ENCODE measurements at regions of chr20 and their contacts with region 1.

Region 1: GRCh38 chr20:63864847-63865640 is at the start of gene TPD52L2:
- DNase-seq: peak; percentile 93
- ATAC-seq: peak; percentile 82
- H3K4me3 Mint-ChIP-seq: peak within 1 kb of the TSS; percentile 99
- H3K27ac Mint-ChIP-seq: peak within 1 kb of the TSS; percentile 99
- H3K4me1 Mint-ChIP-seq: peaks cover 33% of the 10 kb centered on the region
- H3K27me3 Mint-ChIP-seq: no peaks in the 10 kb centered on the region
- CTCF ChIP-seq: no peak
- total RNA-seq, gene TPD52L2: 36.7 and 38.8 TPM in 2 replicates

Region 2: DNA sequence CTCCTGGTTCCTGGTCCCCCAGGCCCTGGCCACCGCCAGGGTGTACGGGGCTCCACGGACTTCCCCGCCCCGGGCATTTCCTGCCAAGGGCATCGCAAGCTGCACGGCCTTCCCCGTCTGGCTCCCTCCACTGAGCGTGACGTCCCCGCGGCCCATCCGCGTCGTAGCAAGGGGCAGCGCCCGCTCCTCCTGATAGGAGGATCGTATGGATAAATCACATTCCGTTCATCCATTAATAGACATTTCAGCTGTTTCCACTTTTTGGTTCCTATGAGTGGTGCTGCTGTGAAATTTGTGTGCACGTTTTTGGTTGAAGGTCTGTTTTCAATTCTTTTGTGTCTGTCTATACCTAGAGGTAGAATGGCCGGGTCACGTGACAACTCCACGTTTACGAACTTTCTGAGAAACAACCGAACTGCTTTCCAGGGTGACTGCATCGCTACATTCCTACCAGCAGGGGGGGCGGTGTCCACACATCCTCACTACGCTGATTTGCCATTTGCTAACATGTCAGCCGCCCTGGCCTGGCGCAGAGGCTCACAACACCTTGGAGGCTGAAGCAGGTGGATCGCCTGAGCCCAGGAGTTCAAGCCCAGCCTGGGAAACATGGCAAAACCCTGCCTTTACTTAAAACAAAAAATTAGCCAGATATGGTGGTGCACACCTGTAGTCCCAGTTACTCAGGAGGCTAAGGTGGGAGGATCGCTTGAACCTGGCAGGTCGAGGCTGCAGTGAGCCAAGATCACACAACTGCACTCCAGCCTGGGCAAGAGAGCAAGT is 430.3 kb before region 1 on chr20:
- CTCF ChIA-PET with region 1: no interaction called
- POLR2A ChIA-PET with region 1: no interaction called
- intact Hi-C with region 1: loop called (anchors 2 kb)
- DNase-seq: peak; percentile 43
- ATAC-seq: peak; percentile 73
- H3K4me3 Mint-ChIP-seq: peak overlapping the region; percentile 37
- H3K27ac Mint-ChIP-seq: peak overlapping the region; percentile 32
- H3K4me1 Mint-ChIP-seq: peaks cover 12% of the 10 kb centered on the region
- H3K27me3 Mint-ChIP-seq: peaks cover 14% of the 10 kb centered on the region
- CTCF ChIP-seq: peak; percentile 32

Region 3: DNA sequence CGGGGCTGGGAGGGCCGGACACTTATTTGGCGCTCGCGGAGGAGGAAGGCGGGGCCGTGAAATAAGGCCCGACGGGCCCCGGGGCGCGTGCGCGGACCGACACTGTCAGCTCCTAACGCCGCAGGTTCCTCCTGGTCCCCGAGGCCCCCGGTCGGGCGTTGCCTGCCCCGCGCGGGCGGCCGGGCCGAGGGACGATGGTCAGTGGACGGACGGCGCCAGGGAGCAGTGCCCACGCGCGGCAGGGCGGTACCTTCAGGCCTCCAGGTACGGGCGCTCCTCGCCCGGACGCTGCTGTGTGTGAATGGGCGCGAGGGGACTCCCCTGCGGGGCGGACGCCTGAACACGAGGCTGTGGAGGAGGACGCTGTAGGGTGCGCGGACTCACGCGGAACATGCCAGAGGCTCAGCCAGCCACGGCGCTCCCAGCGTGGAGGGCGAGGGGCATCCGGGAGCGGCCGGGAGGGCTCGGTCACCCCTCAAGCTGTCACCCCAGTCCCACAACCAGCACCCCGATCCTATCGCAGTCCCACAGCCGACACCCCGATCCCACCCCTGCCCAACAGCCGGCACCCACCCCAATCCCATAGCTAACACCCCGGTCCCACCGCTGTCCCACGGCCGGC is 237.8 kb before region 1 on chr20:
- CTCF ChIA-PET with region 1: no interaction called
- POLR2A ChIA-PET with region 1: interaction called, 3 read pairs
- intact Hi-C with region 1: loop called (anchors 5 kb)
- DNase-seq: peak; percentile 97
- ATAC-seq: peak; percentile 77
- H3K4me3 Mint-ChIP-seq: peak overlapping the region; percentile 91
- H3K27ac Mint-ChIP-seq: peak overlapping the region; percentile 93
- H3K4me1 Mint-ChIP-seq: peaks cover 45% of the 10 kb centered on the region
- H3K27me3 Mint-ChIP-seq: no peaks in the 10 kb centered on the region
- CTCF ChIP-seq: no peak

Region 4: GRCh38 chr20:63707549-63708300 is 157.3 kb before region 1 on chr20 and contains the starts of genes ARFRP1 and ZGPAT:
- CTCF ChIA-PET with region 1: interaction called, 10 read pairs
- POLR2A ChIA-PET with region 1: interaction called, 18 read pairs
- intact Hi-C with region 1: loop called (anchors 1 kb)
- DNase-seq: peak; percentile 91
- ATAC-seq: peak; percentile 94
- H3K4me3 Mint-ChIP-seq: peak within 1 kb of the TSS; percentile 87
- H3K27ac Mint-ChIP-seq: peak within 1 kb of the TSS; percentile 72
- H3K4me1 Mint-ChIP-seq: peaks cover 42% of the 10 kb centered on the region
- H3K27me3 Mint-ChIP-seq: no peaks in the 10 kb centered on the region
- CTCF ChIP-seq: no peak
- total RNA-seq, gene ARFRP1: 63.5 and 66.0 TPM in 2 replicates
- total RNA-seq, gene ZGPAT: 40.7 and 44.0 TPM in 2 replicates

Region 5: DNA sequence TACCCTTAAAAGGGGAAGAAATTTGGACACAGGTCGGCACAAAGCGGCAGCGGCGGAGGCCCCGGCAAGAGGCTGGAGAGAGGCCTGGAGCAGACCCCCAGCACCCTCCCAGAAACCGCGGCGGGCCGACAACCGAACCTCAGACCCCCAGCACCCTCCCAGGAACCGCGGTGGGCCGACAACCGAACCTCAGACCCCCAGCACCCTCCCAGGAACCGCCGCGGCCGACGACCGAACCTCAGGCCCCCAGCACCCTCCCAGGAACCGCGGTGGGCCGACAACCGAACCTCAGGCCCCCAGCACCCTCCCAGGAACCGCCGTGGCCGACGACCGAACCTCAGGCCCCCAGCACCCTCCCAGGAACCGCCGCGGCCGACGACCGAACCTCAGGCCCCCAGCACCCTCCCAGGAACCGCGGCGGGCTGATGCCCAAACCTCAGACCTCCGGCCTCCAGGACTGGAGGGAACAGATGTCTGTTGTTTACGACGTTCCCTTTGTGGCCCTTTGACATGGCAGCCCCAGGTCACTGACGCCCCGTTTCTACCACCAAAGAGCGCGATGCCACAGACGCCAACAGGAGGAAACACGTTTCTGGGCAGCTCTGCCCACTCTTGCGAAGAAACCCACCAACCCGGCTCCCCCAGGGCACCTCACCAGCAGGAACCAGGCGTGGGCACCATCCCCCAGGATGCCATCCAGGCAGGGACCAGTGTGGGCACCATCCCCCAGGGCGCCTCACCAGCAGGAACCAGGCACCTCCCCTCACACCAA is 62.4 kb before region 1 on chr20:
- CTCF ChIA-PET with region 1: no interaction called
- POLR2A ChIA-PET with region 1: no interaction called
- intact Hi-C with region 1: loop called (anchors 1 kb)
- DNase-seq: no peak
- ATAC-seq: no peak
- H3K4me3 Mint-ChIP-seq: no peak overlapping the region
- H3K27ac Mint-ChIP-seq: no peak overlapping the region
- H3K4me1 Mint-ChIP-seq: peaks cover 14% of the 10 kb centered on the region
- H3K27me3 Mint-ChIP-seq: no peaks in the 10 kb centered on the region
- CTCF ChIP-seq: no peak

Region 6: DNA sequence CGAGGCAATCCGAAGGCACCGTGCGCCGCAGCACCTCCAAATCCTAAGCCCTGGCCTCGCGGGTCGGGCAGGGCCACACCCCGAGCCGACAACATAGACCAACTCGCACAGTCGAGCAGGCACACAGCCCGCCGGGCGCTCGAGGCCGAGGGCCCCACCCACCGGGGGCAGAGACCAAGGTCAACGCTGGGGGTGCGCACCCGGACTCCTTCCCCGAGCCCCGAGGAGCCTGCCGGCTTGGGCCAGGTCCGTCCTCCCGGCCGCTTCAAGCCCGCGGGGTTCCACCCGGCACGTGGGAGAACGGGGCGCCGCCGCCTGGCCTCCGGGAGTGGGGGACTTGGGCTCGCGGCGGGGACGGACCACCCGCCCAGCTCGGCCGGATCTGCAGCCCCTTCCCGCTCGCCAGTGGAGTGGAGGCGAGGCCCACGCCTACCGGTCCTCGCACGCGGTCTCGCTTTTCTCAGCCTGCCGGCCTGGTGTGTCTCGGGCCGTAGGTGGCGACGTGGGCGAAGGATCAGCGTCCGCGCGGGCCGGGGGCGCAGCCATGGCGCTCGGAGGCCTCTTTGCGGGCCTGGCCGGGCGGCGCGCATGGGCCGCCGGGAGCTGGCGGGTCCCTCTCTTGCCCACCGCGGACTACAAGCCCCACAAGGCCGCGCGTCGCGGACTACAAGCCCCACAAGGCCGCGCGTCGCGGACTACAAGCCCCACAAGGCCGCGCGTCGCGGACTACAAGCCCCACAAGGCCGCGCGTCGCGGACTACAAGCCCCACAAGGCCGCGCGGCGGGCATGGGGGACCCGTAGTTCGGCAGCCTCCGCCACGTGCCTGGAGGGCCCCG is 91.0 kb after region 1 on chr20 and contains the start of gene UCKL1:
- CTCF ChIA-PET with region 1: interaction called, 3 read pairs
- POLR2A ChIA-PET with region 1: interaction called, 13 read pairs
- intact Hi-C with region 1: loop called (anchors 1 kb)
- DNase-seq: peak; percentile 87
- ATAC-seq: peak; percentile 78
- H3K4me3 Mint-ChIP-seq: peak within 1 kb of the TSS; percentile 87
- H3K27ac Mint-ChIP-seq: peak within 1 kb of the TSS; percentile 85
- H3K4me1 Mint-ChIP-seq: peaks cover 49% of the 10 kb centered on the region
- H3K27me3 Mint-ChIP-seq: no peaks in the 10 kb centered on the region
- CTCF ChIP-seq: no peak
- total RNA-seq, gene UCKL1: 43.6 and 49.7 TPM in 2 replicates

Region 7: GRCh38 chr20:64101731-64102621 is 236.9 kb after region 1 on chr20:
- CTCF ChIA-PET with region 1: no interaction called
- POLR2A ChIA-PET with region 1: no interaction called
- intact Hi-C with region 1: loop called (anchors 10 kb)
- DNase-seq: peak; percentile 81
- ATAC-seq: peak; percentile 42
- H3K4me3 Mint-ChIP-seq: peak overlapping the region; percentile 82
- H3K27ac Mint-ChIP-seq: no peak overlapping the region
- H3K4me1 Mint-ChIP-seq: peaks cover 32% of the 10 kb centered on the region
- H3K27me3 Mint-ChIP-seq: peaks cover 5% of the 10 kb centered on the region
- CTCF ChIP-seq: no peak